ENCODE measurements at regions of chr17 and their contacts with region 1.

Region 1: DNA sequence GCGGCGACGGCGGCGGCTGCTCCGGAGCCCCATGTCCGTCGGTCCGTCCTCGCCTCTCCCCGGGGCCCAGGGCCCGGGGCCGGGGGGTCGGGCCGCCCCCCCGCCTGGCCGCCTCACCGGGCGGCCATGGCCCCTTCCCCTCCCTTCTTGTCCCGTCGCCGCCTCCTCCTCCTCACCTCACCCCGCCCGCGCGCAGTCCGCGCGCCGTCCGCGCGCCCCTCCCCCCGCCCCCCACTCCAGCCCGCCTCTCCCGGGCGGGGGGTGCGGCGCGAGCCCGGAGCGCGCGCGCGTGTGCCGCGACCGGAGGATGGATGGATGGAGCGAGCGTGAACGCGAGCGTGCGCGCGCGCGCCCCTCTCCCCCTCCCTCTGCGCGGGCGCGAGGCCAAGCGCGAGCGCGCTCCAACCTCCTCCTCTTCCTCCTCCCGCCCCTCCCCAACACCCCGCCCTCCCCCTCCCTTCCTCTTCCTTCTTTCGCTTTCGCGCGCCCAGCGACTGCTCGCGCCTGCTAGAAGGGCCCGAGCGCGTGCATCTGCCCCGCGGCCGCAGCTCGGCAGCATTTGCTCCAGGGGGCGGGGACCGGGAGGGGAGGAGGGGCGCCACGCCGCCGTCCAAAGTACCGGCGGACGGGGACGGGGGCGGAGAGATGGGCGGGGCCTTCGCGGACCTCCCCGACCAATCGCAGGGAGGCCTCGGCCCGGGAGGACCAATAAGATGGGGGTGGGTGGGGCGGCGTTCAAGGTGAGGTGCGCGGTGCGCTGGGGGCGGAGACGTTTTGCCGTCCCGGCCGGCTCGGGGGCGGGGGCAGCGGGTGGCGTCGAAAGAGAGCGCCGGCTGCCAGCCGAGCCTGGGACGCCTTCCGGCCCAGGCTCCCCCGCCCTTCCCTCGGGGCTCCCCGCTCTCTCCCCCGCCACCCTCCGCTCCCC is at the start of gene ATXN7L3:
- H3K4me3 Mint-ChIP-seq: peak within 1 kb of the TSS; percentile 92
- H3K27ac Mint-ChIP-seq: peak within 1 kb of the TSS; percentile 97
- H3K4me1 Mint-ChIP-seq: peaks cover 75% of the 10 kb centered on the region
- H3K27me3 Mint-ChIP-seq: no peaks in the 10 kb centered on the region

Region 2: DNA sequence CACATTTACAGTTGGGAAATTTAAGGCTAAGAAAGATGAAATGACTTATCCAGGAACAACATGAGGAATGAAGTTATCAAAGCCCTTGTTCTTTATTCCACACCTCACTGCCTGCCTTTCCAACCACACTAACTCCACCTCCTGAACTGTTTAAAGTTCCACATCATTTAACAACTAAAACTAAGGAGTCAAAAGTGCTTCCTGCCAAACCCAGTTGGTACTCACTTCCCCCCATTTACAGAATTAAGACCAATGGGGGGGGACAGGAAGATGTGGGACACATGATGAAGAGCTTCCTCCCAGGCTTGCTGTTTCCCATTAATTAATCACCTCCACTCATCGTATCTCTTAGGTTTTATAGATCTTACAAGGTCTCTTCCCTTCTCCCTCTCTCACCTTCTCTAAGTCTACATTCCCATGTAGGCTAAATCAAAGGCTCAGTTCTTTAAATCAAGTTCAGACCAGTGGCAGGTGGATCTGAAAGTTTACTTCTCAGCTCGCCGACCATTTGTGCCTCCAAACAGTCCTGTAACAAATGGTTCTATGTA is 165.9 kb before region 1 on chr17:
- intact Hi-C with region 1: no loop called
- H3K4me3 Mint-ChIP-seq: no peak overlapping the region
- H3K27ac Mint-ChIP-seq: peak overlapping the region; percentile 11
- H3K4me1 Mint-ChIP-seq: peaks cover 11% of the 10 kb centered on the region
- H3K27me3 Mint-ChIP-seq: no peaks in the 10 kb centered on the region

Region 3: DNA sequence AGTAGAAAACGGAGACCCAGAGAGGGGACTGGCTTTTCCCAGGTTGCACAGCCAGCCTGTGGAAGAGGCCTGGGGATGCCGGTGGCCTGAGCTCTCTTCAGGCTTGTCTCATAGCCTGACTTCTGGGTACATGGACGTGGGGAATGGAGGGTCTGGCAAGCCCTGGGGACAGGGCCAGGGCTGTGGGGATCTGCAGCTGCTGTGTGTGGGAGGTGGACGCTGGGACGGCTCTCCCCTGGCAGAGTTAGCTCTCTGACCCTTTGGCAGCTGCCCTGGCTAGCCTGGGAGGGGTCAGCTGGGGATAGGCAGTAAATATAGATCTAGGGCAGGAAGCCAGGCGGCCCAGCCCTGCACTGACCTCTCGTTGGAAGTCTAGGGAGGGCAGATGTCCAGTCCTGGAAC is 47.6 kb after region 1 on chr17:
- intact Hi-C with region 1: no loop called
- H3K4me3 Mint-ChIP-seq: no peak overlapping the region
- H3K27ac Mint-ChIP-seq: no peak overlapping the region
- H3K4me1 Mint-ChIP-seq: peaks cover 41% of the 10 kb centered on the region
- H3K27me3 Mint-ChIP-seq: peaks cover 4% of the 10 kb centered on the region

Region 4: GRCh38 chr17:44503147-44504029 is 303.6 kb after region 1 on chr17 and contains the start of gene GPATCH8:
- intact Hi-C with region 1: loop called (anchors 10 kb)
- H3K4me3 Mint-ChIP-seq: peak within 1 kb of the TSS; percentile 90
- H3K27ac Mint-ChIP-seq: peak within 1 kb of the TSS; percentile 88
- H3K4me1 Mint-ChIP-seq: peaks cover 16% of the 10 kb centered on the region
- H3K27me3 Mint-ChIP-seq: peaks cover 8% of the 10 kb centered on the region